ENCODE measurements at regions of chr1 and their contacts with region 1.

Region 1: GRCh38 chr1:167474191-167474716 is 44.1 kb downstream of the CD247 start:
- DNase-seq: no peak
- H3K4me3 Mint-ChIP-seq: peak overlapping the region; percentile 54
- H3K27ac Mint-ChIP-seq: peak overlapping the region; percentile 81
- H3K4me1 Mint-ChIP-seq: peaks cover 72% of the 10 kb centered on the region
- H3K27me3 Mint-ChIP-seq: no peaks in the 10 kb centered on the region

Region 2: DNA sequence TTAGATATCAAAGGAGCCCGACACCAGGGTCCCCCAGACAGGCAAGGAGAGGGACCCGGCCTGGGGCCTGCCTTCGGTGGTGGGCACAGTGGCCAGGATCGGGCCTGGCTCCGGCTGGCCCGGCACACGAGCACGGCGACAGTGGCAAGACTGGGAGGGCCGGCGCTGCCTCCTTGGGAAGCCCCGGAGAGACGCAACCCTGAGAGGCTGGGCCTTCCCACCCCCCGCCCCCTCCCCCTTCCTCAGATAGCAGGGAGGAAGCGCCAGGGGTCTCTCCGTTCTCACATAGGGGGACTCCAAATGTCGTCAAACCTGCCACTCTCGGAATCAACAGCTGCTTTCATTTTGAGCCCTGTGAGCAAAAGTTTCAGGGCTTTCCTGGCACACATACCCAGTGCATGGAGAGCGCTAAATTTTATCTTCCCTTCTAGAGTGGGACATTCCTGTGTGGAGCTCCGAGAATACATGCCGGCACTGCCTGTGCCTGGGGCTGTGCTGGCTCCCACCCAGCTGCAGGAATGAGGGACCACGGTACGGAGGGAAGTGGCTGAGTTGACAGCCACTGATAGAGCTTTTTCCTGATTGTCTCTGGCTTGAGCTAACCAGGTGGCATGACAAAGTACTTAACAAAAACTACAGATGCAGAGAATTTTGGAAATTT is 18.3 kb before region 1 on chr1:
- intact Hi-C with region 1: loop called (anchors 1 kb)
- DNase-seq: peak; percentile 36
- H3K4me3 Mint-ChIP-seq: peak overlapping the region; percentile 81
- H3K27ac Mint-ChIP-seq: peak overlapping the region; percentile 86
- H3K4me1 Mint-ChIP-seq: peaks cover 56% of the 10 kb centered on the region
- H3K27me3 Mint-ChIP-seq: no peaks in the 10 kb centered on the region

Region 3: DNA sequence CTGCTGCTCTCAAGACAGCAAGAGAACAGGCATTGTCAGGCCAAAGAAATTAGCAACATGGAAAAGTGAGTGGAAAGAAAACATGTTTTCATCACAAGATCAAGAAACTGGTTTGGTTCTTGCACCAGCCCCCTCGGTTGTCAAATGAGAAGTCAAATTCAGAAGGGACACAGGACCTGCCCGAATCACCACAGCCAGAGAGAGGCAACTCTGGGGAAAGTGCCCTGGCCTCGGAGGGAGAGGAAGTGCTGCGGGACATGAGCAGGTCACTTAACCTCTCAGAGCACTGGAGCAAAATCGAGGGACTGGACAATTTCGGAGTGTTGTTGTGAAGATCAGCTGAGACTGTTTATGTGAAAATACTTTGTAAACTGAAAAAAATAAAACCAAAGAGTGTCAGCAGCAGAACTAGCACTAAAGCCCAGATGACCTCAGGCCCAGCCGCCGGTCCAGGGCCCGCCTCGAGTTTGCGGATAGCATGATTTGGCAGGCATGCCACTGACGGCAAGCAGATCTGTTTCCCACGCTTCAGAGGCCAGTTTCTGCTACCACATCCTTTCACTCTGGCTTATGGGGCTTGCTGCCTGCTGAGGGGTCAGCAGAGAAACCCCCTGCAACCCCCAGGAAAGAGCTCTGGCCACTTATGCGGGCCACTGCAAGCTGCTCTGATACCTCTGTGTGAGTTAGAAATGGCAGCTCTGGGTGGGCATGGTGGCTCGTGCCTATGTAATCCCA is 12.0 kb after region 1 on chr1:
- intact Hi-C with region 1: loop called (anchors 1 kb)
- DNase-seq: no peak
- H3K4me3 Mint-ChIP-seq: peak overlapping the region; percentile 66
- H3K27ac Mint-ChIP-seq: peak overlapping the region; percentile 88
- H3K4me1 Mint-ChIP-seq: peaks cover 93% of the 10 kb centered on the region
- H3K27me3 Mint-ChIP-seq: no peaks in the 10 kb centered on the region

Region 4: DNA sequence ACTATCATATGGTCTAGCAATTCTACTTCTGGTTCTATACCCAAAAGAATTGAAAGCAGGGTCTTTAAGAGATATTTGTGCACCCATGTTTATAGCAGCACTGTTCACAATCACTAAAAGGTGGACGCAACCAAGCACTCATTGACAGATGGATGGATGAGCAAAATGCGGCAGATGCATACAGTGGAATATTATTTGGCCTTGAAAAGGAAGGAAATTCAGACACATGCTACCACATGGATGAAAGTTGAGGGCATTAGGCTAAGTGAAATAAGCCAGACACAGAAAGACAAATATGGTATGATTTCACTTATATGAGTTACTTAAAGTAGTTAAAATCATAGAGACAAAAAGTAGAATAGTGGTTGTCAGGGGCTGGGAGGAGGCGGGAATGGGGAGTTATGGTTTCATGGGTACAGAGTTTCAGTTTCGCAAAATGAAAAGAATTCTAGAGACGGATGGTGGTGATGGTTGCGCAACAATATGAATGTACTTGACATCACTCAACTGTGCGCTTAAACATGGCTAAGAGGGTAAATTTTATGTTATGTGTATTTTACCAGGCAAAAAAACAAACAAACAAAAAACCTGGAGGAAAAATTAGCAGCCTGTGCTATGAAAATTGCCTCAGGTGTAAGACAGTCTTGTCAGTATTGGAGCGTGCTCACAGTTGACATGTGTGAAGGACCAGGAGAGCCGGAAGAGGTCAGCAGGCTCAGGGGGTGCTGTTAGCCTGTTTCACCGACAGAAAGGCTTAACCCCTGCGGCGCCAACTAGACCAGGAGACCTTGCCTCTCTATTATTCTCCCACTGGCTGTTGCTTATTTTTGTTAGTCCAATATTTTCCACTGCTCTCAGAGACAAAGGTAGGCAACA is 17.6 kb after region 1 on chr1:
- intact Hi-C with region 1: loop called (anchors 1 kb)
- DNase-seq: no peak
- H3K4me3 Mint-ChIP-seq: peak overlapping the region; percentile 70
- H3K27ac Mint-ChIP-seq: peak overlapping the region; percentile 88
- H3K4me1 Mint-ChIP-seq: peaks cover 92% of the 10 kb centered on the region
- H3K27me3 Mint-ChIP-seq: no peaks in the 10 kb centered on the region